IMR-90 (cell line): ENCODE measurements at regions of chr6 and their contacts with region 1.

Region 1: DNA sequence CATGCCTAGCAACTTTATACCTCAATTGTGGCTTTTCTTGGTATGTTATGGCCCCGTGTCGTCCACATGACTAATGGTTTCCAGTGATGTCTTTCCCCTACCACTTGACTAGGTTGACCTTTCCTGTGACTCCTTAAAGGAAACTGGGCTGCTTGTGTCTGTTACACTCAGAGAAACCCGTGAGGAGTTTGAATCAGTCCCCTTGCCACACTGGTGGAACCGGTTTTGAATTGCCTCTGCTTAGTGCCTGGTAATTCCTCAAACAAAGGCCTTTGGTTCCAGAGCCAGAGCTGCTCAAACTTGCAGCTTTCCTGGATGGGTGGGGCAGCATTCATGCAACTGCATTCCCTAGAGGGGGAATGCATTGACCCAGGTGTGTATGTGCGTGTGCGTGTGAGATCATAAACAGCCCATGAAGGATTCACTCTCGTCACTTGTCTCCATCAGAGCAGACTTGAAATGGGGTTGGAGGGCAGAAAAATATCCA is 22.0 kb downstream of the ECT2L start:
- DNase-seq: peak; percentile 81
- ATAC-seq: peak; percentile 26; the same call in 1 of the 2 replicates
- H3K4me3 ChIP-seq: no peak overlapping the region
- H3K27ac ChIP-seq: no peak overlapping the region
- H3K4me1 ChIP-seq: peaks cover 4% of the 10 kb centered on the region
- H3K27me3 ChIP-seq: no peaks in the 10 kb centered on the region
- CTCF ChIP-seq: no peak
- POLR2A ChIP-seq: no peak
- RAD21 ChIP-seq: no peak

Region 2: DNA sequence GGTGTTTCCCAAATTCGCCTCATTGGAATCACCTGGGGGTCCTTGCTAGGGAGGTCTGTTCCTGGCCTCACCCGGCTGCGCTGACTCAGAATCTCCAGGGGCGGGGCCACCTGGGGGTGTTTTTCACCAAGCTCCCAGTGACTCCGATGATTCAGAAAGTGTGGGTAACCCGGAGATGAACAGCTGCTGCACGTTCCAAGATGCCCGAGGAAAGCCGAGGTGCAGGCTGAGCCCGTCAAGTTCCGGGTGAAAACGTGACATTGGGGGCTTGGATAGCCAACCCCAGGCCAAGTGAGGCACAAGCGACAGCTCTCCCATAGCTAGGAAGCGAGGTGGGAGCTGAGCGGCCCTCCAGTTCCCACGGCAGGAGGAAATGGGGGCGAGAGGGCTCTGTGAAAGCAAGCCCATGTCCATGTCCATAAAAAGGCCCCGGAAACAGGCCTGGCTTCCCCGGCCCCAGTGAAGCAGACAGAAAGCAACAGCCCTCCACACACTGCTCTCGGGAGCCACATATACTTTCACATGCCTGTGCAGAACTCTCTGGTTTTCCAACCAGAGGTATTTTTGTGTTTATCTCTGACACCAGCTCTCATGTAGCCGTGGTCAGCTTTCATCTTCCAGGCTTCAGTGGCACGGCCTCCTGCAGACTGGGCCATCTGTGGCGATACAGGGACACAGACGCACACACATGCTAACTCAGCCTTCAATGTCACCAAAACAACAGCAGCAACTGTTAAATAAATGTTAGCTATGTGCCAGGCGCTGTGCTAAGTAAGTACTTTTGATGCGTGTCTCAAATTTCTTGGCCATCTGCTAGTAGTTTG is 134.9 kb before region 1 on chr6:
- CTCF ChIA-PET with region 1: no interaction called
- POLR2A ChIA-PET with region 1: no interaction called
- dilution Hi-C with region 1: no loop called
- in situ Hi-C with region 1: no loop called
- intact Hi-C with region 1: no loop called
- DNase-seq: peak; percentile 86
- ATAC-seq: peak; percentile 85
- H3K4me3 ChIP-seq: peak overlapping the region; percentile 16; the same call in 1 of the 2 replicates
- H3K27ac ChIP-seq: peak overlapping the region; percentile 91
- H3K4me1 ChIP-seq: peaks cover 13% of the 10 kb centered on the region
- H3K27me3 ChIP-seq: no peaks in the 10 kb centered on the region
- CTCF ChIP-seq: no peak
- POLR2A ChIP-seq: peak; percentile 37; the same call in 1 of the 2 replicates
- RAD21 ChIP-seq: no peak

Region 3: GRCh38 chr6:138987640-138988468 is 170.0 kb after region 1 on chr6 and contains the start of gene REPS1:
- CTCF ChIA-PET with region 1: interaction called, 3 read pairs
- POLR2A ChIA-PET with region 1: no interaction called
- dilution Hi-C with region 1: no loop called
- in situ Hi-C with region 1: loop called (anchors 5 kb)
- intact Hi-C with region 1: loop called (anchors 1 kb)
- DNase-seq: peak; percentile 82
- ATAC-seq: peak; percentile 95
- H3K4me3 ChIP-seq: peak within 1 kb of the TSS; percentile 78
- H3K27ac ChIP-seq: peak within 1 kb of the TSS; percentile 92
- H3K4me1 ChIP-seq: peaks cover 2% of the 10 kb centered on the region; the same call in 1 of the 2 replicates
- H3K27me3 ChIP-seq: no peaks in the 10 kb centered on the region; the same call in 1 of the 2 replicates
- CTCF ChIP-seq: peak; percentile 94
- POLR2A ChIP-seq: peak; percentile 85
- RAD21 ChIP-seq: peak; percentile 79
- total RNA-seq, gene REPS1: 21.1 and 21.9 TPM in 2 replicates

Region 4: GRCh38 chr6:139109558-139109957 is 291.7 kb after region 1 on chr6:
- CTCF ChIA-PET with region 1: no interaction called
- POLR2A ChIA-PET with region 1: no interaction called
- dilution Hi-C with region 1: no loop called
- in situ Hi-C with region 1: no loop called
- intact Hi-C with region 1: no loop called
- DNase-seq: peak; percentile 12
- ATAC-seq: no peak
- H3K4me3 ChIP-seq: no peak overlapping the region
- H3K27ac ChIP-seq: no peak overlapping the region
- H3K4me1 ChIP-seq: no peaks in the 10 kb centered on the region
- H3K27me3 ChIP-seq: peaks cover 4% of the 10 kb centered on the region
- CTCF ChIP-seq: peak; percentile 20; the same call in 1 of the 2 replicates
- POLR2A ChIP-seq: no peak
- RAD21 ChIP-seq: 0 out of 2 replicates have a peak, but pooled peaks have one; percentile 11

Region 5: DNA sequence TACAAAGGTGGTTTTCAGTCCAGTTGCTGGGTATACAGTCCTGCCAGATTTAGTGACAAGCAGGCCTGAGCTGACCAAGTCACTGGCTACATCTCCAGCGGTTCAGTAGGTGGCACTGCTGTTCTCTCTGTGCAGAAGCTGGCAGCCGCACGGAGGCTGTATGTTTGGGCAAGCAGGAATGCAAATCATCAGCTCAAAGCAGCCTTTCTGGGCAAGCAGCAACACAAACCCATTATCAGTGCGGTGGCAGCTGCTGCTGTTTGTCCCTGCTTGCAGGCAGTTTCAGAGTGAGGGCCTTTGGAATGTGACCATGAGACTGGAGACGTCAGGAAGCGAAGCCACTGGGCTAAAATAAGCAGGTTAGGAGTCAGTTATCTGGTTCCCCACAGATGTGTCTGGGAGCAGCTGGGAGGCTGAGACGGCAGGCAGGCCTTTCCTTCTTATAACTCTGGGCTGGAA is 401.4 kb after region 1 on chr6:
- CTCF ChIA-PET with region 1: interaction called, 5 read pairs
- POLR2A ChIA-PET with region 1: no interaction called
- dilution Hi-C with region 1: no loop called
- in situ Hi-C with region 1: no loop called
- intact Hi-C with region 1: loop called (anchors 1 kb)
- DNase-seq: peak; percentile 90
- ATAC-seq: peak; percentile 100
- H3K4me3 ChIP-seq: no peak overlapping the region
- H3K27ac ChIP-seq: peak overlapping the region; percentile 32; the same call in 1 of the 2 replicates
- H3K4me1 ChIP-seq: no peaks in the 10 kb centered on the region
- H3K27me3 ChIP-seq: no peaks in the 10 kb centered on the region
- CTCF ChIP-seq: peak; percentile 90
- POLR2A ChIP-seq: no peak
- RAD21 ChIP-seq: peak; percentile 96

Region 6: GRCh38 chr6:139679516-139680179 is 861.8 kb after region 1 on chr6:
- CTCF ChIA-PET with region 1: no interaction called
- POLR2A ChIA-PET with region 1: no interaction called
- dilution Hi-C with region 1: no loop called
- in situ Hi-C with region 1: no loop called
- intact Hi-C with region 1: no loop called
- DNase-seq: peak; percentile 45
- ATAC-seq: peak; percentile 66
- H3K4me3 ChIP-seq: no peak overlapping the region
- H3K27ac ChIP-seq: no peak overlapping the region
- H3K4me1 ChIP-seq: peaks cover 2% of the 10 kb centered on the region; the same call in 1 of the 2 replicates
- H3K27me3 ChIP-seq: no peaks in the 10 kb centered on the region
- CTCF ChIP-seq: no peak
- POLR2A ChIP-seq: no peak
- RAD21 ChIP-seq: no peak